BJ (cell line): ENCODE measurements at regions of chr5 and their contacts with region 1.

Region 1: GRCh38 chr5:57082441-57083067 is 91.3 kb upstream of the GPBP1 start:
- DNase-seq: no peak
- H3K4me3 ChIP-seq: no peak overlapping the region
- H3K27me3 ChIP-seq: no peaks in the 10 kb centered on the region
- CTCF ChIP-seq: peak; percentile 32

Region 2: GRCh38 chr5:57128325-57128724 is 45.8 kb after region 1 on chr5:
- CTCF ChIA-PET with region 1: no interaction called
- POLR2A ChIA-PET with region 1: interaction called, 11 read pairs
- DNase-seq: no peak
- H3K4me3 ChIP-seq: no peak overlapping the region
- H3K27me3 ChIP-seq: no peaks in the 10 kb centered on the region
- CTCF ChIP-seq: no peak

Region 3: DNA sequence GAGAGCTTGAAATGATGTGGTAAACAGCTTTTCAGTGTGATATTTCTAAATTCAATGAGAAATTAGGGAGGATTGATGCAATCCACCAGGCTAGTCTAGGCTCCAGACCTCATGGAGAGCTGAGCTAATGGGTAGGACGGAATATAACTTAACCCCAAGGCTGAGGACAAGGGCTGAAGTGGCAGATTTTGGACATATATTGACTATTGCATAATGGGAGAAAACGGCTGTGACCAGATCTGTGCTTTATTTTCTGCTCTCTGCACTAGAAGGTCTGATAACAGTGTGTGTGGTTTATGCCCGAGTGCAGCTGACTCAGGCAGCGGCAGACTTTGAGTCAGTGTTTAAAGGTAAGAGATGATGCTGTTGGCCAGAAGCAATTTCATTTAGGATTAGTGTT is 329.4 kb after region 1 on chr5:
- CTCF ChIA-PET with region 1: no interaction called
- POLR2A ChIA-PET with region 1: no interaction called
- DNase-seq: no peak
- H3K4me3 ChIP-seq: no peak overlapping the region
- H3K27me3 ChIP-seq: no peaks in the 10 kb centered on the region
- CTCF ChIP-seq: no peak